Mammary epithelial cell (primary cell): ENCODE measurements at regions of chr12 and their contacts with region 1.

Region 1: DNA sequence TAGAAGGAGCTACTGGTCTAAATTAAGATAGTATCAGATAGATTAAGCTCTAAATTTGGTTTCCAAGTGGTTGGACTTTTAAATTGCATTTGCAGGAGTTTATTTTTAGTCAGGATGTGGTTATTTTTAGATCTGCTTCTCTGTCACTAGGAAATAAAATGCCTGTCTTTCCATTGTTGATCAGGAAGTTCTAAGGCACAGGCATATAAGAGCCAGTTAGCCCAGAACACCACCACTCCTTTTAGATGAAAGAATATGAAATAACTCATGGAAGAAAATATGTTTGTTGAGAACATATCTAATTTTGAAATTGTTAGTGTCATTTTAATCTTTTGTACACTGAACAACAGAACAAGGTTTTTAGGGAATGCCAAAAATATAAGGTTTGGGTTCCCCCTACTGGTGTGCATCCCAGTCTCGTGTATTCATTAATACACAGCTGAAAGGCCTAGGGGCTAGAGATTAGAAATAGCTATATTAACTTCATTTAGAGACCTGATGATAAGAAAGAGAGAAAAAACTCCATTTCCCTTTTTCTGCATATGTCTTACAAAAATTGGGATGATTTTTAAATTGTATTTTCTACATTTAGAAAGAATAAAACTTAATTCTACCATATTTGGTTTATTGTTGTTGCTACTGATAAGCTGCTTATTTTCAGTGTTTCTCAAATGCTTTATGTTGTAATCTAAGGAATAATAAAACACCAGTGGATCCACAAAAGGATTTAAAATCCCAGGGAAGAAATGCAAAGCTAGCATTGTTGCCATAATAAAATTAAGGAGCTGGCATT is 67.2 kb downstream of the RIC8B start:
- DNase-seq: peak; percentile 17
- H3K4me3 ChIP-seq: no peak overlapping the region
- H3K27ac ChIP-seq: no peak overlapping the region
- H3K4me1 ChIP-seq: no peaks in the 10 kb centered on the region
- H3K27me3 ChIP-seq: no peaks in the 10 kb centered on the region
- CTCF ChIP-seq: peak; percentile 50 to 60

Region 2: DNA sequence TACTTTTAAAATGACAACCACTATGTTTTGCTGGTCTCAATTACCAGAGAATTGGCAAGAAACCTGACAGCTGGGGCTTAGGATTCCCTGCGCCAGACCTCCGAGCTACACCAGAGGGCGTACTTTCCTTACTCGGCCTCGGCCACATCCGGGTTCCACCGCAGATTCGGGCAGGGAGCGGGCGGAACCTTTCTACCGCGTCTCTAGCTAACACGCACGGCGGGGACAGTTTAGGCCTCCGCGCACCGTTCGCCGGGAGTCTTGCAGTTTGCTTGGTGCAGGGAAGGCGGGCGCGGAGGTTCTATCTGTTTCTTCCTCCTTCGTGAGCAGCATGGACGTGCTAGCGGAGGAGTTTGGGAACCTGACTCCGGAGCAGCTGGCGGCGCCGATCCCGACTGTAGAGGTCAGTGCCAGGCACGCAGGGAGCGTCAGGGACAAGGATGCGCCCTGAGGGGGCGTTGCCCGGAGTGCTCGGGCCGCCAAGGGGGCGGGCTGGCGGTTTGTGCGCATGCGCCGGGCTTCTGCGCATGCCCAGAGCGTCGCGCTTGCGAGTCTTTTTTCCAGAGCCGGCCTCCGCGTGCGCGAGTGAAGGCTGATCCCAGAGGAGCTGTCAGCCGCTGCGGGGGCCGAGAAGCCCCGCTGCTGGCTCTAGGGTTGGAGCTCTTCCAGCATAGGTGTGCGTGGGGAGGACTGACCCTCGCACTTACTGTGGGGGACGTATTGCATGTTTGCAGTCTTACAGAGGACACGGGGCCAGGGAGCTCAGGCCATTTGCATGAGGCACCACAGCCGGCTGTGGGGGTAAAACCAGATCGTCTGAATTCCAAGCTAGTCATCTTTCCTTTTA is 483.9 kb before region 1 on chr12 and contains the start of gene POLR3B:
- CTCF ChIA-PET with region 1: interaction called, 11 read pairs
- dilution Hi-C with region 1: no loop called
- in situ Hi-C with region 1: no loop called
- intact Hi-C with region 1: loop called (anchors 1 kb)
- DNase-seq: peak; percentile 93
- H3K4me3 ChIP-seq: peak within 1 kb of the TSS; percentile 75 to 90 (median 81)
- H3K27ac ChIP-seq: peak within 1 kb of the TSS; percentile 69
- H3K4me1 ChIP-seq: peaks cover 10% of the 10 kb centered on the region
- H3K27me3 ChIP-seq: no peaks in the 10 kb centered on the region
- CTCF ChIP-seq: peak; percentile 81 to 92
- total RNA-seq, gene POLR3B: 13.3 TPM

Region 3: GRCh38 chr12:106551410-106551809 is 290.3 kb before region 1 on chr12:
- CTCF ChIA-PET with region 1: no interaction called
- dilution Hi-C with region 1: no loop called
- in situ Hi-C with region 1: no loop called
- intact Hi-C with region 1: no loop called
- DNase-seq: no peak
- H3K4me3 ChIP-seq: no peak overlapping the region
- H3K27ac ChIP-seq: no peak overlapping the region
- H3K4me1 ChIP-seq: no peaks in the 10 kb centered on the region
- H3K27me3 ChIP-seq: peaks cover 3% of the 10 kb centered on the region
- CTCF ChIP-seq: no peak

Region 4: DNA sequence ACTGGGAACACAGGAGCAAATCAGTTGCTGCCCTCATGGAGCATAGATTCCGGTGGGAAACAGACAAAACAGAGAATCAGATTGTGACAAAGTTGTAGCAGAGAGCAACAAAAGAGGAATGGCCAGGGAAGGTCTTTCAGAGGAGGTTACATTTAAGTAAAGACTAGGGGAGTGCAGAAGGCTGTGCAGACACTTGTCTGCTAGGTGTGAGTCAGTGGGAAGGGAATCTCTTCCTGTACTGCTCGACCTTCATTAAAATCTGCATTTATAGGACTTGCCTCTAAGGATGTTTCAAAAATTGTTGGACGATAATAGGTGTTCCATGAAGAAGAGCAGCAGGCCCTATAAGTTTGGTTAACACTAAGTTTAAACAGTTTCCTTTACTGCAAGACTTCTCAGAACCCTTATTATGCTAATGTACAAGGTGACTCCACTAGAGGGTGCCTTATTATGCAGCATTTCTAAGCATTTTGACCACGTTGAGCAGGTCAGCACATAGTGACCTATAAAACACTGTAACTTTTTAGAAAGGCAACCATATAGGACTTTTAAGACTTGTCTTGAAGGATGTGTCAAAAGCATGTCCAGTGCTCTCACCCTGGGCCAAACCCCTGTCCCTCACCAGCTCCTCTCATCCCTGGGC is 159.0 kb before region 1 on chr12:
- CTCF ChIA-PET with region 1: no interaction called
- dilution Hi-C with region 1: no loop called
- in situ Hi-C with region 1: no loop called
- intact Hi-C with region 1: loop called (anchors 2 kb)
- DNase-seq: peak; percentile 10
- H3K4me3 ChIP-seq: no peak overlapping the region
- H3K27ac ChIP-seq: no peak overlapping the region
- H3K4me1 ChIP-seq: no peaks in the 10 kb centered on the region
- H3K27me3 ChIP-seq: no peaks in the 10 kb centered on the region
- CTCF ChIP-seq: peak; percentile 30